HEK293 (cell line): ENCODE measurements at regions of chr15 and their contacts with region 1.

Region 1: DNA sequence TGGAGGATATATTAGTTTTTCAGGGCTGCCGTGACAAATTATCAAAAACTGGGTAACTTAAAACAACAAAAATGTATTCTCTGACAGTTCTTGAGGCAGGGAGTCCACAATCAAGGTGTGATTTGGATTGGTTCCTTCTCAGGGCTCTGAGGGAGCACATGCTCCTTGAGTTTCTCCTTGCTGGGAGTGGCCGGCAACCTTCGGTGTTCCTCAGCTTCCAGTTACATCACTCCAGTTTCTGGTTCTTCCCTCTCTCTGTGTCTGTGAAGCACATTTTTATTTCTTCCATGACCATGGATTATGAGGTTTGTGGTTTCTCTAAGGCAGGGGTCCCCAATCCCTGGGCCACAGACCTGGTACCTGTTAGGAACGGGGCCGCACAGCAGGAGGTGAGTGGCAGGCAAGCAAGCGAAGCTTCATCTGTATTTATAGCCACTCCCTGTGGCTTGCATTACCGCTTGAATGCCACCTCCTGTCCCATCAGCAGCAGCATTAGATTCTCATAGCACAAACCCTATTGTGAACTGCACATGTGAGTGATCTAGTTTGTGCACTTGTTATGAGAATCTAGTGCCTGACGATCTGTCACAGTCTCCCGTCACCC is 24.3 kb downstream of the LRRC28 start:
- H3K4me3 ChIP-seq: no peak overlapping the region
- H3K27ac ChIP-seq: no peak overlapping the region
- H3K4me1 ChIP-seq: peaks cover 6% of the 10 kb centered on the region; the same call in 1 of the 2 replicates
- CTCF ChIP-seq: no peak

Region 2: GRCh38 chr15:99097441-99098397 is 177.9 kb before region 1 on chr15:
- CTCF ChIA-PET with region 1: interaction called, 10 read pairs
- POLR2A ChIA-PET with region 1: no interaction called
- H3K4me3 ChIP-seq: no peak overlapping the region
- H3K27ac ChIP-seq: no peak overlapping the region
- H3K4me1 ChIP-seq: no peaks in the 10 kb centered on the region; the same call in 1 of the 2 replicates
- CTCF ChIP-seq: no peak

Region 3: DNA sequence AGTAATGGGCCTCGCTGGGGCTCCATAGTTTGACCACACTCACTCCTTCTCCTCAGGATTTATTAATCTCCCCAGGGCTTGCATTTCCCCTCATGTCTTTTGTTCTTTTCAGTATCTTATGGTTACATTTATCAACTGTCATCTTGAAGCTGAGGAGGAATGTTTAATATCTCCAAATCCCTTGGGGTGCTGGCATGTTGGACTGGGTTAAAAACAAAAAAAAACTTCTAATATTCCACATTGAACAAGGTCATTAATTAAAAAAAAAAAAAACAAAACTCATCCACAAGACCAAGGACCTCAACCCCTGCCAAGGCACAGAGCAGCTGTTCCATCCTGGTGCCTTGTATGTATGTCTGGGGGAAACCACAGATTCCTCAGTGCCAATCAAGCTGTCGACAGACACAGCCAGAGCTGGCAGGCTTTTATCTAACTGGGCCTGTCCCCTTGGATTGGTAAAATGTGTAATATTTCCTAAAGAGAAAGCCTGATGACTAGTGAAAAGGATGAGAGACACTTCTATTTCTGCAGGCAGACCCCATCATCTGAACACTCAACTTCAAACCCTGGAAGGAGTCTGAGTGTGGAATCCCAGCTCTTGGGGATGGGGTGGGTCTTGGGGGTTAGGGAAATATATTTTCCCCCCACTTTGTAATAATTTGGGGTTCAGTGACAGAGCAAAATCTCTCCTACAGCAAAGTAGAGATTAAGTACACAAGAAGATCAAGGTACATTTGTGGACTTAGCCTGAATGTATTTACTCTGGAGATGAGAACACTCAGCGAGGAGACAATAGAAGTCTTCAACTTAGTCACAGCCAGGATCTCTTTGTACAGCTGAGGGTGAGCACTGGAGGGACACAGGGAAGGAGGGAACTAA is 95.3 kb before region 1 on chr15:
- CTCF ChIA-PET with region 1: no interaction called
- POLR2A ChIA-PET with region 1: no interaction called
- H3K4me3 ChIP-seq: no peak overlapping the region
- H3K27ac ChIP-seq: no peak overlapping the region
- H3K4me1 ChIP-seq: peaks cover 3% of the 10 kb centered on the region; the same call in 1 of the 2 replicates
- CTCF ChIP-seq: no peak

Region 4: GRCh38 chr15:99250494-99251435 is 24.9 kb before region 1 on chr15:
- CTCF ChIA-PET with region 1: interaction called, 36 read pairs
- POLR2A ChIA-PET with region 1: interaction called, 3 read pairs
- H3K4me3 ChIP-seq: peak overlapping the region; percentile 88
- H3K27ac ChIP-seq: peak overlapping the region; percentile 93
- H3K4me1 ChIP-seq: peaks cover 18% of the 10 kb centered on the region; the same call in 1 of the 2 replicates
- CTCF ChIP-seq: no peak

Region 5: DNA sequence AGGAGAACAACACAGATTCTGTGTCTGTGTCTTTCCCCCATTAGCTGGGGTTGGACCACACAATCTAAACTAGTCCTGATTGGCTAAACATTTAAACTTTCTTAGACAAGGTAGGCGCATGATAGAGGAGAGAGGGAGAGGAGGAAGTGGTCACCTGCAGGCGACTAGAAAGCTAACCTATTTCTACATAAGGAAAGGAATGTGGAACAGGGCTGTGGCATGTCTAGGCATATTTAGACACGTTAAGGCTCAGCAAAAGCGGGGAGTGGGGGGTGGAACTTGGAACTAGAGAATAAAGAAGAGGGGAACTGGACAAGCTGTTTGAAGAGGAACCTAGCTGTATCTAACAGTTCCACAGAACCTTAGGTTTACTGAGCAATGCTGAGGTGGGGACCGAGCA is 11.5 kb before region 1 on chr15:
- CTCF ChIA-PET with region 1: interaction called, 30 read pairs
- POLR2A ChIA-PET with region 1: no interaction called
- H3K4me3 ChIP-seq: no peak overlapping the region
- H3K27ac ChIP-seq: no peak overlapping the region
- H3K4me1 ChIP-seq: peaks cover 12% of the 10 kb centered on the region
- CTCF ChIP-seq: no peak

Region 6: DNA sequence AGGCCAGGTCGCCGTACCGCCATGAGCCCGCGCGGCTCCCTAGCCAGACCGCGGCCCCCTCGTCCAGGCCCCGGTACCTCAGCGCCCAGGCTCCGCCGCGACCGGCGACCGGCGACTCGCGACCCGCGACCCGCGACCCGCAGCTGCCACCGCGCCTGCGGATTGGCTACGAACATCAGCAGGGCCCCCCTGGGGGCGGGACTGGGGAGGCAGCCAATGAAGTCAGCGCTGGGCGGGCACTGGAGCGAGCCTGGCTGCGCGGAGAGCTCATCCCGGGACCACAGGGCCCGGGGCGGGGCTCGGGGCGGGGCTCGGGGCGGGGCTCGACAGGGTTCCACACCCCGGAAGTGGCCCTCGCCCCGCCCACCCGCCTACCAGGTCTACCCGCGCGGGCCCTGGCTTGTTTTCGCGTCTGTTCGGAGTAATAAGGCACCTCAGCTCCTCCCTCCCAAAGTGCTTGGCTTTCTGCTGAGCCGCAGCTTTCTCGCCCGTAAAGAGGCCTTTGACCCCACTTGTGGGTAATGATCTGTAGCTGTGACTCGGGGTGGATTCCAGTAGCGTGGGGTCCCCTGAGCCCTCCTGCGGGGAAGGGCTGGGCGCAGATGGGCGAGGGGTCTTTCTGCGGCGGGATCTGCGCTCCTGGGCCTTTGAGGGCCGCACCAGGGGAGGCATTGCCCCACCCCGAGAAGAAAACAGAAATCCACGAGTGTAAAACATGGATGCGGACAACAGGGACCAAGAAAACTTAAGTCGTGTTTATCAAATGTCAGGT is 457.8 kb after region 1 on chr15 and contains the start of gene LYSMD4:
- CTCF ChIA-PET with region 1: interaction called, 26 read pairs
- POLR2A ChIA-PET with region 1: interaction called, 3 read pairs
- H3K4me3 ChIP-seq: peak within 1 kb of the TSS; percentile 81
- H3K27ac ChIP-seq: peak within 1 kb of the TSS; percentile 67
- H3K4me1 ChIP-seq: peaks cover 5% of the 10 kb centered on the region; the same call in 1 of the 2 replicates
- CTCF ChIP-seq: no peak

Region 7: DNA sequence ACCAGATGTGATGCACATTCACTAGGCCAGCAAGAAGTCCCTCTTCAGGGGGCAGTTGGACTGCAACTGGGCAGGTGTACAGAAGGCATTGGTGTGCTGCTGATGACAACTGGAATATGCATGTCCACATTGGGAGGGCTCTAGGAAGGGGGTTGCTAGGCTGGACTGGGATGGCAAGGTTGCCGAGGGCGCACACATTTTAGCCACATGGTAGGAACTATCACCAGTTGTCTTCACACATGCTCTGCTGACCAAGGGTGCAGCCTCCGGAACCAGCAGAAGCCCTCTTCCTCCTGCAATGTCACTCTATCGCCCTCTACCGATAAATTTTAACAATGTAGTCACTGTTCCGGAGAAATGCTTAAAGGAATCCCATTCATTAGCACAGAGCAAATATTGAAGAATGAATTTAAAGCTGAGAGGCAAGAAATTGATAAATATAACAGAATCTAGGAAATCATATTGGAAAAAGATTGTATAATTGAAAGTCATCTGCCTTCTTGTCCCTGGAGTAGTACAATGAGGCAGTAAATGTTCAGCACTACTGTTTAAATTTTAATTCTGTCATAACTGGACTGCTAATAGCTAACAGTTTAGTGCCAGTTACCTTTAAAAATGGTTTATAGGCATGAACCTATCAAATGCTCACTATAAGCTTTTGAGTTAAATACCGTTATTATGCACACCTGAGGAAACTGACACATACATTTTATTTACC is 480.2 kb after region 1 on chr15:
- CTCF ChIA-PET with region 1: interaction called, 50 read pairs
- POLR2A ChIA-PET with region 1: no interaction called
- H3K4me3 ChIP-seq: no peak overlapping the region
- H3K27ac ChIP-seq: no peak overlapping the region
- H3K4me1 ChIP-seq: no peaks in the 10 kb centered on the region
- CTCF ChIP-seq: peak; percentile 65